MCF 10A (cell line): ENCODE measurements at regions of chr13 and their contacts with region 1.

Region 1: GRCh38 chr13:97710797-97711196 is 242.7 kb upstream of the IPO5 start:
- DNase-seq: peak; percentile 58
- H3K4me3 Mint-ChIP-seq: no peak overlapping the region
- H3K27ac Mint-ChIP-seq: no peak overlapping the region
- H3K4me1 Mint-ChIP-seq: no peaks in the 10 kb centered on the region
- H3K27me3 Mint-ChIP-seq: no peaks in the 10 kb centered on the region
- CTCF ChIP-seq: no peak

Region 2: DNA sequence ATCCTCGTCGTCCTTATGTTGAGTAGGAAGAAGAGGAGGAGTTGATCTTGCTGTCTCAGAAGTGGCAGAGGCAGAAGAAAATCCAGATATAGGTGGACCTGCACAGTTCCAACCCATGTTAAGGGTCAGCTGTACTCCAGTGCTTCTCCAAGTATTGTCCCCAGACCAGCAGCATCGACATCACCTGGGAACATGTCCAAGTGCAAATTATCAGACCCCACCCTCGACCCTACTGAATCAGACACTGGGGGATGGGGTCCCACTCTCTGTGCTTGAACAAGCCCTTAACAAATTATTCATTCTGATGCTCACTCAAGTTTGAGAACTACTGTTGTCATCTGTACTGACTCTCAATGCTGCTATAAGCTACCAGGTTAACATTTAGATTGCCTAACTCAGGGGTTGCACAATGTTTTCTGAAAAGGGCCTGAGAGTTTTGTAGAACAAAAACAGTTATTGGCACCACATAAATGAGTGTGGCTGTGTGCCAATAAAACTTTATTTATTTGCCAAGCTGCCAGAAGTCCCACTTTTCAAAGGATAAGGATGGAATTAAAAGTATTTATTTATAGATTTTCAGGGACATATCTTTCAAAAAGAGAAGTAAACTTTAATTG is 16.0 kb after region 1 on chr13:
- CTCF ChIA-PET with region 1: interaction called, 4 read pairs
- POLR2A ChIA-PET with region 1: interaction called, 10 read pairs
- intact Hi-C with region 1: no loop called
- DNase-seq: peak; percentile 96
- H3K4me3 Mint-ChIP-seq: no peak overlapping the region
- H3K27ac Mint-ChIP-seq: peak overlapping the region; percentile 70
- H3K4me1 Mint-ChIP-seq: peaks cover 52% of the 10 kb centered on the region
- H3K27me3 Mint-ChIP-seq: no peaks in the 10 kb centered on the region
- CTCF ChIP-seq: no peak